RWPE1 (cell line): ENCODE measurements at regions of chr13 and their contacts with region 1.

Region 1: GRCh38 chr13:41411522-41411921 is 45.8 kb upstream of the RGCC start:
- DNase-seq: peak; percentile 35
- H3K27ac ChIP-seq: no peak overlapping the region
- CTCF ChIP-seq: no peak

Region 2: GRCh38 chr13:41652727-41653361 is 241.3 kb after region 1 on chr13:
- CTCF ChIA-PET with region 1: interaction called, 19 read pairs
- POLR2A ChIA-PET with region 1: no interaction called
- DNase-seq: peak; percentile 41
- H3K27ac ChIP-seq: no peak overlapping the region
- CTCF ChIP-seq: peak; percentile 68